ENCODE measurements at regions of chr7 and their contacts with region 1.

Region 1: GRCh38 chr7:82605247-82605872 is 161.8 kb upstream of the CACNA2D1 start:
- DNase-seq: no peak
- H3K4me3 ChIP-seq: no peak overlapping the region
- H3K27ac ChIP-seq: no peak overlapping the region
- H3K4me1 ChIP-seq: peaks cover 0 to 3% (median 0%) of the 10 kb centered on the region in 4 experiments; a peak in 1 of 7 replicates
- H3K27me3 ChIP-seq: no peaks in the 10 kb centered on the region
- CTCF ChIP-seq: peak in 2 of 3 experiments; percentile 59 to 72; a peak in 2 of 4 replicates
- EP300 ChIP-seq: no peak
- POLR2A ChIP-seq: no peak
- RAD21 ChIP-seq: peak; percentile 88 to 89

Region 2: DNA sequence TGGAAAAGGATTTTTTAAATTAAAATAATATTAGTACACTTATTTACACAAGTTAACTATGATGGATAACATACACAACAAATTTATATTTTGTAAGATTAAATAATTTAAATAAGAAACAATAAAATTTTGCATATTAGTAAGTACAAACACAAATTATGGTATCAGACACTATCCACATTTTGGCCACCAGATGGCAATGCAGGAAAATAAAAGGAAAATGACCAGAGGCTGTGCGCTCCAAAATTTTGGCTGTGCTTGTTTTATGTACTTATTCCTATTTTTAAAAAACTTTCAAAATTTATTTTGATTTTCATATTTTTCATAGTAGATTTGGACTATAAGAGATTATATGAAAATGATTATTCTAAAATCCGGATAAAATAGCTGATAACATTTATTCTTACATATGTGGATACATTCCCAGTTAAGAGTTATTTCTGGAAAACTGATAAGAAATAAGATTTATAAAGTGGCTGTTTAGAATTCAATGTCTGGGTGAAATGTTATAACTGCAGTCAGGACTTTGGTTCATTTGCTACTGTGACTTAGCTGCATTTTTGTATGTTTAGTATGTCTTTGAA is 560.8 kb before region 1 on chr7:
- CTCF ChIA-PET with region 1: interaction called, 11 read pairs
- POLR2A ChIA-PET with region 1: no interaction called
- DNase-seq: no peak
- H3K4me3 ChIP-seq: no peak overlapping the region
- H3K27ac ChIP-seq: no peak overlapping the region
- H3K4me1 ChIP-seq: no peaks in the 10 kb centered on the region
- H3K27me3 ChIP-seq: no peaks in the 10 kb centered on the region
- CTCF ChIP-seq: peak in 2 of 3 experiments; percentile 31 to 47; a peak in 2 of 4 replicates
- EP300 ChIP-seq: no peak
- POLR2A ChIP-seq: no peak
- RAD21 ChIP-seq: peak; percentile 79 to 81

Region 3: GRCh38 chr7:82593780-82594179 is 11.6 kb before region 1 on chr7:
- CTCF ChIA-PET with region 1: interaction called, 21 read pairs
- POLR2A ChIA-PET with region 1: no interaction called
- DNase-seq: no peak
- H3K4me3 ChIP-seq: peak overlapping the region in 1 of 4 experiments; percentile 37; a peak in 1 of 8 replicates
- H3K27ac ChIP-seq: no peak overlapping the region
- H3K4me1 ChIP-seq: peaks cover 0 to 5% (median 1%) of the 10 kb centered on the region in 4 experiments; a peak in 3 of 7 replicates
- H3K27me3 ChIP-seq: no peaks in the 10 kb centered on the region
- CTCF ChIP-seq: no peak
- EP300 ChIP-seq: no peak
- POLR2A ChIP-seq: no peak
- RAD21 ChIP-seq: no peak

Region 4: DNA sequence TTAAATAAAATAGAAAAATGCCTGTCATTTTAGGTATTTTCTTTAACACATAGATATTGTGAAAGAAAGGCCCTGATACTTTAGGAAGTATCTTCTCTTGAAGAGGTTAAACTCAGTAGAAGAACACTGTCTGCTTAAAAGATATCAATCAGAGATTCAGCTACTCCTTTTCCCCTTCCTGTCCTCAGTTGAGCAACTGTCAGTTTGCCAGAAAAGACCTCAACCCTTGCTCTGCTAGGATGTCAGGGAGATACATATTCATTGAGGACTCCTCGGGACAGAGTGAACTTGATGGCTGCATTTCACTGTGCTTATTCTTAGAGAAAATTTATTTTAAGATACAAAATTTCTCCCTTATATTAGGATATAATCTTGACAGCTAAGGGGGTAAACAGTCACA is 11.8 kb after region 1 on chr7:
- CTCF ChIA-PET with region 1: interaction called, 17 read pairs
- POLR2A ChIA-PET with region 1: no interaction called
- DNase-seq: no peak
- H3K4me3 ChIP-seq: no peak overlapping the region
- H3K27ac ChIP-seq: no peak overlapping the region
- H3K4me1 ChIP-seq: no peaks in the 10 kb centered on the region
- H3K27me3 ChIP-seq: no peaks in the 10 kb centered on the region
- CTCF ChIP-seq: no peak
- EP300 ChIP-seq: no peak
- POLR2A ChIP-seq: no peak
- RAD21 ChIP-seq: no peak

Measured in H1 (cell line).